ENCODE measurements at regions of chr4 and their contacts with region 1.

Region 1: DNA sequence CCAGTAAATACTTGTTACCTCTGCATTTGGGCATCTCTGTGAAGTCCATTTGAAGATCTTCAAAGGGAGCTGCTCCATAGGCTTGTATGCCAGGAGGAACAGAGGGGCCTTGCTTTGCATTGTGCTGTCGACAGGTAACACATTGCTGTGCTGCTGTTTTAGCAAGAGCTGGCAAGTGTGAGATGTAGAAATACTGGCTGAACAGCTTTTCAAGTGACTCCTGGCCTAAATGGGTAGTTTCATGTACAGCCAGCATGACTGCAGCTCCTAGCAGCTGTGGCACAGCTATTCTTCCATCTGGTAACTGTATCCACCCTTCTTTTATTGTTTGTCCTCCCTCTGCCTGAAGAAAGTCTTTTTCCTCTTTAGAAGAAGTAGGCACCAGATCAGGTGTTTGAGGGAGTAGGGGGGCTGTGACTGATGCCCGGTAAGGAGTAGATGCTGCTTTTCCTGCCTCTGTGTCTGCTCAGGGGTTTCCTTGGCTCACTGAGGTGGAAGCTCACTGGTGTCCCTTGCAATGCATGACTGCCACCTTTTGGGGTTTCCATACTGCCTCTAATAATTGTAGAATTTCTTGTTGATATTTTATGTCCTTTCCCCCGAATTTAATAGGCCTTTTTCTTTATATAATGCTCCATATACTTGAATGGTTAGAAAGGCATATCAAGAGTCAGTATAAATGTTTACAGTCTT is 965.4 kb downstream of the CCSER1 start:
- ATAC-seq: no peak
- H3K4me3 ChIP-seq: no peak overlapping the region
- H3K27ac ChIP-seq: no peak overlapping the region
- H3K4me1 ChIP-seq: no peaks in the 10 kb centered on the region

Region 2: DNA sequence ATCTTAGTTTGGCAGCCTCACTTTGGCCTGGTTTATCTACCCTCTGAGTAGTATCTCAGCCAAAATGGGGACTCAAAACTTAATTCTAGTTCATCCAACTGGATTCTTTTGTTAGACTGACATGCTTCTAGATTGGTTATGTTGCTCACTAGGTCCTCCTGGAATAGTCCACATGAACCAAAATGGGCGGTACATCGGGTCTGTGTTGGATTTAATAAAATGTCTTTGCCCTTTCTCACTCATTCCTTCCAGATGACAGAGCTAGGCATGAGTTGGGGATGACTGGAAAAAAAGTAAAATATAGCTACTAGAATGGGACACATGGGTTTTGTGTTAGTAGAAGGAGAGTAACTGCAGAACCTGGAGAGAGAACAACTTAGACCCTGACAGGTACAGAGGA is 717.5 kb before region 1 on chr4:
- in situ Hi-C with region 1: loop called in 1 of 9 experiments (anchors 25 kb)
- ATAC-seq: no peak
- H3K4me3 ChIP-seq: no peak overlapping the region
- H3K27ac ChIP-seq: no peak overlapping the region
- H3K4me1 ChIP-seq: peaks cover 0 to 12% of the 10 kb centered on the region in 2 donors

Region 3: GRCh38 chr4:91471280-91471679 is 378.7 kb after region 1 on chr4:
- in situ Hi-C with region 1: no loop called
- ATAC-seq: peak in 7 of 8 experiments; percentile 39 to 100 (median 93)
- H3K4me3 ChIP-seq: no peak overlapping the region
- H3K27ac ChIP-seq: no peak overlapping the region
- H3K4me1 ChIP-seq: no peaks in the 10 kb centered on the region

Measured in motor neuron (in vitro differentiated cells).